Posterior vena cava (tissue), 2 donors: ENCODE measurements at regions of chr10 and their contacts with region 1.

Region 1: GRCh38 chr10:28302638-28303488 is at the start of gene MPP7:
- DNase-seq: peak; percentile 99
- total RNA-seq, gene MPP7: 37.1 to 58.6 TPM

Region 2: DNA sequence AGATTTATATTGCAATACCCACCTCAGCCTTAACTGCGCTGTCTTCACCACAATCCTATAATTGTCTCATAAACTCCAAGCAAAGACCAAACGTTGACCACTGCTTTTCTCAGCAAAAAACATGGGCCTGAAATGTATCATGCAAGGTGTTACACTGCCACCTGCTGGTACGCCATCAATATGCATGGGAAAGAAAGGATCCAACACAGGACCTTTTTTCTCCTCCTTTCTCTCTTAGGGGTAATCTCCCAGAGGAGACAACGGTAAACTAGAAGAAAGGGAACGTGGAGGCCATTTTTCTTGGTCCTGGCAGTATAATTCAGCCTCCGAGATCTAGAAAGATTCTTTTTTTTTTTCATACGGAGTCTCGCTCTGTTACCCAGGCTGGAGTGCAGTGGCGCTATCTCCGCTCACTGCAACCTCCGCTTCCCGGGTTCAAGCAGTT is 79.1 kb after region 1 on chr10:
- intact Hi-C with region 1: loop called in 1 of 2 experiments (anchors 5 kb)
- DNase-seq: peak; percentile 90